K562 (cell line): ENCODE measurements at regions of chr1 and their contacts with region 1.

Region 1: DNA sequence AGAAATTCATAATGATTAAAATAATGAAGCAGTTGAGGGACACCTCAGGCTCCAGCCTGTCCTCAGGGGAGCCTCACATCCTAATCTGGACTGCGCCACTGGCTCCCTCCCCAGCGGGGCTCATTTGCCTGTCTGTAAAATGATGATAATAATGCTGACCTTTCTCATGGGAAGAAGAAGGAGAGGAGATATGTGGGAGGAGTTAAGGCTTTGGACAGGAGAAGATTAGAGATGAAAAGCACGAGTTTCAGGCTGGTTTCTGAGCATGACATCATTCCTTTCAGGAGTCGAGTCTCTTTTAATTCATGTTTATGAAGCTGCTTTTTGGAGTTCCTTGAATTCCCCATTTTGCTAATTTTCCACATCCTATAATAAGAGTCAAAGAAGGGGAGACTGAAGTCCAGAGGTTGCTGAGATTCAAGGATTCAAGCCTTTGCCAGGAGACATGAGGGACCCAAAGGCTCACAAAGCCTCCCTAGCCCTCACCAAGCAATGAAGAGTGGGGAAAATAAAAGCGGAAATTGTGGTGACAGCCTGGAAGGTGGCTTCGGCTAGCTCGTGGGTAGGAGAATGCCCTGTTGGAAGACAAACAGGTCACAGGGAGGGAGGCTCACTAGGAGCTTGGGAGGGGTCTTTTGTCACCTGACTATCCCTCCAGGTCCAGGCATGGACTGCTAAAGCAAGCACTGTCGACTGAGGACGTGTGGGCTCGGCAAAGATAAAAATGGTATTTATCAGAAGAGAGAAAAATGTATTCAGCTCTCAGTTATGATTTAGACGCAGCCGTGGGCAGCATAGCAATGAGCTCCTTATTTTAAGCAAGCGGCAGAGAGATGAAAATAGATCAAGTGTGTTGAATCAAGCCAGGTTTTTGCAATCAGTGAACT is 27.5 kb upstream of the STMN1 start:
- DNase-seq: peak; percentile 72 to 96 (median 84)
- ATAC-seq: peak; percentile 96
- H3K4me3 ChIP-seq: peak overlapping the region; percentile 4
- H3K27ac ChIP-seq: peak overlapping the region; percentile 87
- H3K4me1 ChIP-seq: peaks cover 20 to 31% of the 10 kb centered on the region in 2 experiments
- H3K27me3 ChIP-seq: no peaks in the 10 kb centered on the region
- CTCF ChIP-seq: 0 out of 6 replicates have a peak, but pooled peaks of 1 of the 3 experiments have one; percentile 9
- EP300 ChIP-seq: peak; percentile 92
- POLR2A ChIP-seq: peak; percentile 65
- RAD21 ChIP-seq: peak in 1 of 2 experiments; percentile 19; a peak in 1 of 4 replicates

Region 2: DNA sequence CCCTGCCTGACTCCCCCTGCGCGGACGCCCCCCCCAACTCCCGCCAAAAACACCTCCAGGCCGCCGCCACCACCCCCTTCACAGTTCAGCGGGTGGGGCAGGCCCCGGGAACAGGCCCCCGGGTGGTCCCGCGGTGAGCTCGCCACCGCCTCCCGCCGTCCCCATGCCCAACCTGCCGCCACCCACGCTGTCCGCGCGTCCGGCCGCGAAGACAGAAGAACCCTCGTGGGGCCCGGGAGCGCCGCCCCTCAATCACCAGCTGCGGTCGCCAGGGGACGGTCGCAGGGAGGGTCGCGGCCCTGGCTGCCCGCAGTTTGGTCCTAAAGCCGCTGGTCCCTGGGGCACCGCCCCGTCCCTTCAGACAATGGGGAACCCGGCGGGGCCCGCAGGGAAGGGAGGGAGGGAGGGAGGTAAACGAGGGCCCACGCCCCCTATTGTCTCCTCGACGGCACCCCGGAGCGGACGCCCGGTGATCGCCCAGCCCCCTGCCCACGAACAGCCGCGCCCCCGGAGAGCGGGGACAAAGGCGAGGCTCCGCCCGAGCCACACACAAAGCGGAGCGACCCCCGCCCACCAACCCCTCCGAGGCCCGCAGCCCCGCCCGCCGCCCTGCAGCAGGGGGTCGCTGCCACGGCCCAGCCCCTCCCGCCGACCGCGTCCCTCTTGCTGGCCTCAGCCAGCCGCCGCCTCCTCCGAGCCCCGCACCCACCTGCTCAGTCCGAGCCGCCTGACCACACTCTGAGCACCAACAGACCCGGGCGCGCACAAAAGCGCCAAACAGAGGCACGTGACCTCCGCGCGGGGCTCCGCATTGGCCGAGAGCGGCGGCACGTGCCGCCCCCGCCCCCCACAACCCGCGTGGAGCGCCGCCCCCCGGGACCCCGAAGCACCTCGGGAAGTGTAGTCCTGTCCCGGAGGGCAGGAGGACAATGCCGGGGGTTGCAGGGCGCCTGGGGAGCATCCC is 27.8 kb before region 1 on chr1 and contains the start of gene STMN1:
- CTCF ChIA-PET with region 1: interaction called, 3 read pairs
- POLR2A ChIA-PET with region 1: interaction called, 11 read pairs
- in situ Hi-C with region 1: no loop called
- intact Hi-C with region 1: loop called (anchors 2 kb)
- DNase-seq: peak; percentile 97 to 99 (median 97)
- ATAC-seq: peak; percentile 94
- H3K4me3 ChIP-seq: peak within 1 kb of the TSS; percentile 78
- H3K27ac ChIP-seq: peak within 1 kb of the TSS; percentile 93
- H3K4me1 ChIP-seq: peaks cover 13 to 24% of the 10 kb centered on the region in 2 experiments; a peak in 4 of 5 replicates
- H3K27me3 ChIP-seq: no peaks in the 10 kb centered on the region
- CTCF ChIP-seq: no peak; a peak in 2 of 6 replicates
- EP300 ChIP-seq: peak; percentile 53
- POLR2A ChIP-seq: peak; percentile 97
- RAD21 ChIP-seq: peak in 1 of 2 experiments; percentile 20; a peak in 1 of 4 replicates
- polyA plus RNA-seq, gene STMN1: 2,090 to 2,153 TPM

Region 3: GRCh38 chr1:25922056-25922969 is 11.4 kb before region 1 on chr1:
- CTCF ChIA-PET with region 1: no interaction called
- POLR2A ChIA-PET with region 1: interaction called, 13 read pairs
- in situ Hi-C with region 1: no loop called
- intact Hi-C with region 1: no loop called
- DNase-seq: no peak
- ATAC-seq: no peak
- H3K4me3 ChIP-seq: no peak overlapping the region
- H3K27ac ChIP-seq: peak overlapping the region; percentile 10; the same call in 2 of the 3 replicates
- H3K4me1 ChIP-seq: peaks cover 37 to 42% of the 10 kb centered on the region in 2 experiments
- H3K27me3 ChIP-seq: no peaks in the 10 kb centered on the region
- CTCF ChIP-seq: no peak
- EP300 ChIP-seq: no peak
- POLR2A ChIP-seq: no peak
- RAD21 ChIP-seq: no peak

Region 4: DNA sequence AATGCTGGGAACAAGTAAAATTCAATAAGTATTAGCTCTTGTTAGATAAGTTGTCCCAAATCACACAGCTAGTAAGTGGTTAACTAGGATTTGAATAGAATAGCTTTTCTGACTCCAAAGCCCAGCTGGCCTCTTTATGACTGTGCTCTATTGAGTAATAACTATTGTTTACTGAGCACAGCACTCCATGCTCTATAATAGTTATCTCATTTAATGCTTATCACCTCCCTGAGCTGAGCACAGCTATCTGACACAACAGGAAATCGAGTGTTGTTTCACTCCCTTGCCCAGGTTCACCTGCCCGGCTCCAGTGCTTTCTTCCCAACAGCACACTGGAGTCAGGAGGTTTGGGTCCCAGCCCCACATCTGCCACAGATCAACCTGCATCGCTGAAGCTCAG is 11.3 kb after region 1 on chr1:
- CTCF ChIA-PET with region 1: no interaction called
- POLR2A ChIA-PET with region 1: interaction called, 18 read pairs
- in situ Hi-C with region 1: no loop called
- intact Hi-C with region 1: no loop called
- DNase-seq: no peak
- ATAC-seq: no peak
- H3K4me3 ChIP-seq: no peak overlapping the region
- H3K27ac ChIP-seq: no peak overlapping the region
- H3K4me1 ChIP-seq: no peaks in the 10 kb centered on the region; a peak in 1 of 5 replicates
- H3K27me3 ChIP-seq: no peaks in the 10 kb centered on the region
- CTCF ChIP-seq: no peak
- EP300 ChIP-seq: no peak
- POLR2A ChIP-seq: no peak
- RAD21 ChIP-seq: no peak

Region 5: DNA sequence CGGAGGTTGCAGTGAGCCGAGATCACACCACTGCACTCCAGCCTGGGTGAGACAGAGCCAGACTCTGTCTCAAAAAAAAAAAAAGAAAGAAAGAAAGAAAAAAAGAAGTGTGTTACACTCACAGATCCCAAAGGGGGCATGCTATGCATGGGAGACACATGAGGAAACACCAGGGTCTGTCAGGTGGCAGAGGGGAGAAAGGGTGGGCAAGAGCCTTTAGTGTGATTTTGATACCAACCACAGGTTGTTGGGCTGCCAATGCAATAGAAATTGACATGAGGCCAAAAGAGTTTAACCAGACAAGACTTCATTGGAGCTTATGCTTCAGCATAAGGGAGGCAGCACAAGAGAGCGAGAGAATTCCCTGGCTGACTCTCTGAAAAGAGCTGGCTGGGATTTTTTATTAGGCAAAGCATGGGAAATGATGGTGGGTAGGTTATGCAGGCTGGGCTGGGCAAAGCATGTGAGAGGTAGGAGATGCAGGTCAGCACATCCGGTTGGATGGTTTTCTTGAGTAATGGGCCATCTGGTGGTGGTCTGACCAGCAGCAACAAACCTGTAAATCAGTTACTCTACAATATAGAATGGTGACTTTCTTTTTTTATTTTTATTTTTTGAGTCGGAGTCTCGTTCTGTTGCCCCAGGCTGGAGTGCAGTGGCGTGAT is 76.2 kb after region 1 on chr1:
- CTCF ChIA-PET with region 1: no interaction called
- POLR2A ChIA-PET with region 1: no interaction called
- in situ Hi-C with region 1: no loop called
- intact Hi-C with region 1: no loop called
- DNase-seq: peak in 2 of 4 experiments; percentile 47 to 77
- ATAC-seq: peak; percentile 77
- H3K4me3 ChIP-seq: no peak overlapping the region
- H3K27ac ChIP-seq: no peak overlapping the region
- H3K4me1 ChIP-seq: peaks cover 19 to 23% of the 10 kb centered on the region in 2 experiments
- H3K27me3 ChIP-seq: no peaks in the 10 kb centered on the region
- CTCF ChIP-seq: peak; percentile 57 to 69 (median 59)
- EP300 ChIP-seq: no peak
- POLR2A ChIP-seq: no peak
- RAD21 ChIP-seq: peak in 1 of 2 experiments; percentile 77; a peak in 2 of 4 replicates